ENCODE measurements at regions of chr20 and their contacts with region 1.

Region 1: DNA sequence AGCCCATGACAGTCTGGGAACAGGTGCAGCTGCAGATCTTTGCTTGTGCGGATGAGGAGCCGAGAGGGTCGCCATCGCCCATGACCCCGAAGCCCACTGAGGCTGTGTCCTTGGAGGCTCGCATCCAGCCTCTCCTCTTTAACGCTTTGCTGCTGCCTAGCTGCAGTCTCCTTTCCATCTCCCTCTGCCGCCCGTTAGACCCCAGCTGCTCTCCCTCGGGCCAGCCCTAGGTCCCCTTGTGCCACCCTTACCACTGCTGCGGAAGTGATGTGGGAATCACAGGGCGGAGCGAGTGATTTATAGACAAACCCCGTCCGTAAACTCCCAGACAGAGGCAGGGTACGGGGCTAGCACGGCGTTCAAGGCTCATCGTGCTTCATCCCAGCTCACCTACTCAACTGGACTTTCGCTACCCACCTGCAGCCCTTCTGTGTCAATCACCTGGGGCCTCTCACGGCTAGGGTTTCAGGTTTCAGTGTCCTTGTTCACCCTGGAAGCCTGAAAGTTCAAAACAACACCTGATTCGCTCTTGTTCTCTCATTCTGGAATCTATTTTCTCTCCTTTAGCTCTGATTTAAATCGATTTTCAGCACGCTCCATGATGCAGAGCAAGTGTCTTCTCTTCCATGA is 76.1 kb downstream of the PAX1 start:
- DNase-seq: no peak
- ATAC-seq: no peak

Region 2: GRCh38 chr20:21808863-21809664 is 27.5 kb after region 1 on chr20:
- intact Hi-C with region 1: loop called (anchors 1 kb)
- DNase-seq: peak; percentile 73
- ATAC-seq: peak; percentile 44